Left cardiac atrium (tissue), 4 donors: ENCODE measurements at regions of chr6 and their contacts with region 1.

Region 1: DNA sequence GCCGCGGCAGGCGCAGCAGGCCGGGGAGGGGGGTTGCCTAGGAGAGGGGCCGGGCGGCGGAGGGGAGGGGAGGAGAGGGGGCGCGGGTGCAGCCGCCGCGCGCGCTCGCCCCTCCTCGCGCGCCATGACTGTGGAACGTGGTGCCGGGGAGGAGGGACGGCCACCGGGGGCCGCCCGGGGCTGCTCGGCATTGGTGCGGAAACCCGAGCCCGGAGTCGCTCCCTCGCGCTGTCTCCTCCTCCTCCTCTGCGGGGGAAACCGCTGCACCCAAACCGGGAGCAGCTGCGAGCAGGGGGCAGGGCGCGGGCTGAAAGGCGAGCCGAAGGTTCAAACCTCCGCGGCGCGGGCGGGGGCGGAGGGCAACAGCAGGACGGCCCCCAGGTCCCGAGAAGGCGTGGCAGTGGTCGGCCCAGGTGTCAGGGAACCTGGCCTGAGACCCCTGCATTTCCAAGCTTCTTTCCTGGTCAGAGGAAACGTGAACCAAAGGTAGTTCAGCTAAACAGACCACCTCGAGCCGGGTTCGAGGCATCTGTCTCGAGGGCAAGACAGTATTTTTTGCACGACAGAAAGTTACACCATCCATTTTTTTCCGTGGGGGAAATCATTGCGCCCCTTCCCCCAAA is 1.4 kb upstream of the TRERF1 start:
- DNase-seq: peak; percentile 92
- ATAC-seq: peak; percentile 92 to 95

Region 2: DNA sequence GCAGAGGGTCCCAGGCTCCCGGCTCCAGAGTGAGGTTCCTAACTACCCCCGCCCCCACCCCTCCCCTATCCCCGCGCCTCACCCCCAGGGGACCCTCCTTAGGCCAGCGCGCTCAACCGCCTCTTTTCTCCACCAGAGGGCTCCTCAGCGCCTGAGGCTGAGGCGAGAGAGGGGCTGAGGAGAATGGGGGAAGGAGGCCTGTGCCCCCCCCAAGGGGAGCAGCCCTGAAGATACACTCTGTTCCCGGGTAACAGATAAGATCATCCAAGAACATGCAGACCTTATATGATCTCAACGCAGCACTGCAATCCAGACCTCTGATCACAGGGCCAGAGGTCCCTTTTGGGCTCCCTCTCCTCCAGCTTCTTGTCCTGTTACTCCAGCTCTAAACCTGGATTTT is 192.2 kb before region 1 on chr6:
- intact Hi-C with region 1: loop called in 1 of 2 experiments (anchors 10 kb)
- DNase-seq: peak; percentile 43
- ATAC-seq: peak; percentile 70 to 76

Region 3: GRCh38 chr6:42532038-42532669 is 79.0 kb after region 1 on chr6:
- intact Hi-C with region 1: loop called in 1 of 2 experiments (anchors 10 kb)
- DNase-seq: no peak
- ATAC-seq: peak; percentile 51 to 63

Region 4: GRCh38 chr6:43547222-43547621 is 1094.1 kb after region 1 on chr6:
- intact Hi-C with region 1: no loop called
- DNase-seq: no peak
- ATAC-seq: no peak